Activated T-helper 2 cell treated with anti-CD3 and anti-CD28 coated beads, Interferon-gamma antibody, Interleukin-2, Interleukin-4, amounts not matched to agents 10 μg/mL and 5 μg/mL and 100 μg/mL, durations not matched to agents 14 hours and 24 hours and 36 hours (primary cell): ENCODE measurements at regions of chr6 and their contacts with region 1.

Region 1: DNA sequence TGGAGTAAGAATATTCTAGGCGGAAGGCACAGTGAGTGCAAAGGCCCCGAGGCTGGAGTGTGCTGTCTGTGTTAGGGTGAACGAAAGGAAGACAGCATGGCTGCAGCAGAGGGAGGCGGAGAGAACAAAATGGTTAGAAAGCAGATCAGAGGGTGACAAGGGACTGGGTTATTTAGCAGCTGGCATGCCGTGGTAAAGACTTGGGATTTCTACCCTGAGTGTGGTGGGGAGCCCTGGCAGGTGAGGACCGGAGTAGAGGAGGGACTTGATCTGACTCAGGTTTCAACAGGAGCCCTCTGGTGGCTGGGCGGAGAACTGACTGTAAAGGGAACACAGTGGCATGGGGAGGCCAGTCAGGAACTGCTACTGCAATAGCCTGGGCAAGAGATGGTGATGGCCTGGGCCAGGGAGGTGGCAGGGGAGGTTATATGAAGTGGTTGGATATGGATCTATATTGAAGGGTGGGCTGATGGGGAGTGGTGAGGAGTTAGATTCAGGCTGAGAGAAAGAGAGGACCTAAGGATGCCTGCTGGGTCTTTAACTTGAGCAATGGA is 38.0 kb downstream of the PIM1 start:
- DNase-seq: peak; percentile 85
- H3K4me3 Mint-ChIP-seq: peak overlapping the region; percentile 15
- H3K27ac Mint-ChIP-seq: peak overlapping the region; percentile 76
- H3K4me1 Mint-ChIP-seq: peaks cover 57% of the 10 kb centered on the region
- H3K27me3 Mint-ChIP-seq: no peaks in the 10 kb centered on the region

Region 2: DNA sequence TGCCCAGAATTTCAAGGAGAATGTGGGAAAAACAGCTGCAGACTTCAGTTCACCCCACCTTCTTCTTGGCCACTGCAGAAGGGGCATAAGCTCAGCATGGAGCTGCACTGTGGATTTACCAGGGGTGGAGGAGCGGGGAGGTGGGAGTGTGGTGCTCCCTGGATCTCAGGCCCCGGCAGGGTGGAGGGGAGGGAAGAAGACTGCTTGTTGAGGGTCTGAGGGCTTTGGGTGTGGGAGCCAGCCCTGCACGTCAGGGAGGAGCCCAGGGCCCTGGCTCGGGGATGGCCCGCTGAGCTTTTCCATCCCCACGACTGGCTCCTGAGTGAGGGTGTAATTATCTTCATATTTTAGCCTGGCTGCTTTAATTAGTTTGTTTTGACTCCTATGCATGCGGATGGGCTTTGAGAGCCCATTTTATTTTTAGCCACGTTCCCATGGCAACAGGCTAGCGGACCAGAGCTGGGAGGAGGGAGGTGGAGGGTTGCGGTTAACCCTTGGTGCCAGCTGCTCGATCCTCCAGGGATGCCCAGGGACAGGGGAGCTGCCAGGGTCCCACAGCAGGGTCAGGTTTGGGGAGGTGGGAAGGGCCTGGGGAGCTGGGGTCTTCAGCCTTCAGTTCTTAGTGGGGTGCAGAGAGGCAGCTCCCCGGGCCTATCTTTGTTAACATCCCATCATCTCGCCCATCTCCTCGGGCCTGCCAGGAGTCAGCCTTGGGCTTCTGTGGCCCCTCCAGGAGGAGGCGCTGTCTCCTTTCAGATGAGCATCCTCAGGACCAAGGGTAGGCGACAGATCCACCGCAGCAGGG is 442.2 kb before region 1 on chr6:
- intact Hi-C with region 1: loop called (anchors 2 kb)
- DNase-seq: peak; percentile 74
- H3K4me3 Mint-ChIP-seq: no peak overlapping the region
- H3K27ac Mint-ChIP-seq: peak overlapping the region; percentile 0
- H3K4me1 Mint-ChIP-seq: peaks cover 30% of the 10 kb centered on the region
- H3K27me3 Mint-ChIP-seq: no peaks in the 10 kb centered on the region

Region 3: DNA sequence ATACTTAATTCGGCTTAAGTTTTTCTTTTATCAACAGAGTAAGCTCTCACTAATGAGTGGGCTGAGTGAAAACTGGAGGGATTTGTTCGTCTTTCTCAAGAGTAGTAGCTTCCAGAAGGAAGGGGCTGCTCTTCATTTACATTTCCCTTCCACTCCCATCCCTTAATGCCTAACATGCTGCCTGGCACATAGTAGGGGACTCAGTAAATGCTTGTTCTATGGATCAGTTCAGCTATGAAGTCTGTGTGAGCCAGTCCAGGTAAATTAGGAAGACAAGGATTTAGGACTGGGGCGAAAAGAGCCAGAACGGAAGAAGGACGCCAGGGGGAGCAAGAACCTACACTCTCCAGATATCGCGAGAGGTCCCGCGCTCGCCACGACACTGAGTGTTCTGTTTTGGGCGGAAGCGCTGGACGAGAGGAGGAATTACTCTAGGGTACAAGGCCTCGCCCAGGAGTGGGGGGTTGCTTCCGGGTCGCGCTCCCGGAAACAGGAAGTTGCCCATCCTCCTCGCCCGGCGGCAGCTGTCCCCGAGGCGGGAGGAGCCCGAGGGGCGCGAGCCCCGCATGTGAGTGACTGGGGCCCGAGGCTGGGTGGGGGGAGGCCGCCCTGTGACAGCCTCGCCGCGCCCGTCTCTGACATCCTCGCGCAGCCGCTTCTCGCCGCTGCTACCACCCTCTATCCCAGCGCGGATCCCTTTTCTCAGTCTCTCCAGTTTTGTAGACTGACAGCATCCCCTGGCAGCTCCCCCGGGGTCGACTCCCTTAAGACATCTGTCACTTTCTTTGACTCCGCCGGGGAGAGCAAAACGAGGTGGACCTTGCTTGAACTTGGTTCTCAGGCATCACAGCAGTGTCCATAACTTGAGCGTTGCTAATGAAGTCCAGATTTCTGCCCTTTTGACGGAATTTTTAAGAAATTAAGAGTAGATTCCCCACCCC is 322.2 kb before region 1 on chr6 and contains the start of gene C6orf89:
- intact Hi-C with region 1: loop called (anchors 2 kb)
- DNase-seq: peak; percentile 95
- H3K4me3 Mint-ChIP-seq: peak within 1 kb of the TSS; percentile 87
- H3K27ac Mint-ChIP-seq: peak within 1 kb of the TSS; percentile 80
- H3K4me1 Mint-ChIP-seq: peaks cover 32% of the 10 kb centered on the region
- H3K27me3 Mint-ChIP-seq: no peaks in the 10 kb centered on the region
- total RNA-seq, gene C6orf89: 28.4 and 29.9 TPM in 2 replicates

Region 4: GRCh38 chr6:37051138-37052026 is 156.6 kb before region 1 on chr6:
- intact Hi-C with region 1: loop called (anchors 1 kb)
- DNase-seq: peak; percentile 77
- H3K4me3 Mint-ChIP-seq: peak overlapping the region; percentile 47
- H3K27ac Mint-ChIP-seq: peak overlapping the region; percentile 99
- H3K4me1 Mint-ChIP-seq: peaks cover 54% of the 10 kb centered on the region
- H3K27me3 Mint-ChIP-seq: no peaks in the 10 kb centered on the region

Region 5: GRCh38 chr6:37182736-37183590 is 25.0 kb before region 1 on chr6:
- intact Hi-C with region 1: loop called (anchors 1 kb)
- DNase-seq: peak; percentile 73
- H3K4me3 Mint-ChIP-seq: peak overlapping the region; percentile 52
- H3K27ac Mint-ChIP-seq: peak overlapping the region; percentile 99
- H3K4me1 Mint-ChIP-seq: peaks cover 46% of the 10 kb centered on the region
- H3K27me3 Mint-ChIP-seq: no peaks in the 10 kb centered on the region

Region 6: GRCh38 chr6:37190159-37190535 is 17.8 kb before region 1 on chr6:
- intact Hi-C with region 1: loop called (anchors 2 kb)
- DNase-seq: no peak
- H3K4me3 Mint-ChIP-seq: no peak overlapping the region
- H3K27ac Mint-ChIP-seq: peak overlapping the region; percentile 76
- H3K4me1 Mint-ChIP-seq: peaks cover 53% of the 10 kb centered on the region
- H3K27me3 Mint-ChIP-seq: no peaks in the 10 kb centered on the region

Region 7: GRCh38 chr6:37239950-37240713 is 32.2 kb after region 1 on chr6:
- intact Hi-C with region 1: no loop called
- DNase-seq: peak; percentile 27
- H3K4me3 Mint-ChIP-seq: no peak overlapping the region
- H3K27ac Mint-ChIP-seq: peak overlapping the region; percentile 86
- H3K4me1 Mint-ChIP-seq: peaks cover 41% of the 10 kb centered on the region
- H3K27me3 Mint-ChIP-seq: no peaks in the 10 kb centered on the region